HepG2 (cell line): ENCODE measurements at regions of chr7 and their contacts with region 1.

Region 1: GRCh38 chr7:127585044-127585953 is at the start of gene GCC1:
- DNase-seq: peak; percentile 75
- ATAC-seq: peak; percentile 63
- H3K4me3 ChIP-seq: peak within 1 kb of the TSS; percentile 68 to 86 (median 83)
- H3K27ac ChIP-seq: peak within 1 kb of the TSS; percentile 62
- H3K4me1 ChIP-seq: peaks cover 75% of the 10 kb centered on the region
- H3K27me3 ChIP-seq: no peaks in the 10 kb centered on the region; a peak in 1 of 5 replicates
- CTCF ChIP-seq: 0 out of 2 replicates have a peak, but pooled peaks have one; percentile 23
- EP300 ChIP-seq: no peak
- POLR2A ChIP-seq: peak; percentile 65 to 86
- RAD21 ChIP-seq: no peak
- total RNA-seq, gene GCC1: 15.3 and 17.4 TPM in 2 replicates

Region 2: DNA sequence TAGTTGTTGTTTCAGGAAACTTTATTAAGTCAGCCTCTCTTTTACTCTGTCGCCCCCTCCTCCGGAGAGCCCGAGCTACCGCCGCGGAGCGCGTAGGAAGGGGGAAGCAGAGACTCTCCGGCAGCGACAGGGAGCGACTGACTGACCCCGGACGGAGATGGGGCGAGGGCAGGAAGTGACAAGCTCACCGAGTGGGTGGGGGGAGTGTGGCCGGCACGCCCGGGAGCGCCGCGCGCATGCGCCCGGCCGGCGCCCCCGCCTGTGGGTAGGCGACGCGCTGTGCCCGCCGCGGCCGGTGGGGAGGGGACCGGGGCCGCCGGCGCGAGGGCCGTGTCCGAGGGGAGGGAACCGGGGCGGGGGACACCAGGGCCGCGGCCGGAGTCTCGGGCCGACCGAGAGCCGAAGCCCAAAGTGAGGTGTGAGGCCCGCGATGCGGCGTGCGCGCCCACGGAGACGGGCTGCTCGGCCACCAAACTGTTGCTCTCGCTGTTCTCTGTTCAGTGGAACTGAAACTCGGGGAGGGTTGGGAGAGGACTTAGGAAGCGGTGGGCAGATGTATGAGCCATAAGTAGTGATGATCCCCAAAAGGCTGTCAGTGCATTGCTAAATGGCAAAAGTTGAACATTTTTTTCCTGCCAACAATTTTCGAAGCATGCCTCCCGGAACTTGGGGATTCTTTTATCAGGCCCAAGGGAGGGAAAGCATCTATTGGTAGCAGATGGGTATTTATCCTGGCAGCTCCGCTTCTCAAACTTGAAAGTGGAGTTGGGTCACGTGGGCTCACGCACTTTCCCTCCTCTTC is 192.5 kb before region 1 on chr7 and contains the start of gene ZNF800:
- CTCF ChIA-PET with region 1: no interaction called
- POLR2A ChIA-PET with region 1: interaction called, 3 read pairs
- in situ Hi-C with region 1: no loop called
- intact Hi-C with region 1: loop called (anchors 10 kb)
- DNase-seq: peak; percentile 78
- ATAC-seq: peak; percentile 94
- H3K4me3 ChIP-seq: peak within 1 kb of the TSS; percentile 91 to 100 (median 97)
- H3K27ac ChIP-seq: peak within 1 kb of the TSS; percentile 79
- H3K4me1 ChIP-seq: peaks cover 37% of the 10 kb centered on the region
- H3K27me3 ChIP-seq: no peaks in the 10 kb centered on the region; a peak in 1 of 5 replicates
- CTCF ChIP-seq: no peak
- EP300 ChIP-seq: no peak
- POLR2A ChIP-seq: peak; percentile 76 to 89
- RAD21 ChIP-seq: no peak; the same call in 1 of the 2 replicates
- total RNA-seq, gene ZNF800: 12.7 and 13.7 TPM in 2 replicates

Region 3: GRCh38 chr7:127629268-127629854 is 44.1 kb after region 1 on chr7:
- CTCF ChIA-PET with region 1: interaction called, 8 read pairs
- POLR2A ChIA-PET with region 1: interaction called, 3 read pairs
- in situ Hi-C with region 1: no loop called
- intact Hi-C with region 1: loop called (anchors 2 kb)
- DNase-seq: peak; percentile 33
- ATAC-seq: peak; percentile 98
- H3K4me3 ChIP-seq: peak overlapping the region in 1 of 3 experiments; percentile 26; a peak in 1 of 6 replicates
- H3K27ac ChIP-seq: no peak overlapping the region
- H3K4me1 ChIP-seq: no peaks in the 10 kb centered on the region
- H3K27me3 ChIP-seq: no peaks in the 10 kb centered on the region; a peak in 1 of 5 replicates
- CTCF ChIP-seq: peak; percentile 88
- EP300 ChIP-seq: no peak
- POLR2A ChIP-seq: no peak
- RAD21 ChIP-seq: peak; percentile 52

Region 4: GRCh38 chr7:127651556-127652332 is 66.4 kb after region 1 on chr7 and contains the start of gene SND1:
- CTCF ChIA-PET with region 1: no interaction called
- POLR2A ChIA-PET with region 1: interaction called, 4 read pairs
- in situ Hi-C with region 1: loop called (anchors 5 kb)
- intact Hi-C with region 1: loop called (anchors 10 kb)
- DNase-seq: peak; percentile 99
- ATAC-seq: peak; percentile 96
- H3K4me3 ChIP-seq: peak within 1 kb of the TSS; percentile 86 to 98 (median 98)
- H3K27ac ChIP-seq: peak within 1 kb of the TSS; percentile 88
- H3K4me1 ChIP-seq: peaks cover 64% of the 10 kb centered on the region
- H3K27me3 ChIP-seq: no peaks in the 10 kb centered on the region; a peak in 1 of 5 replicates
- CTCF ChIP-seq: no peak
- EP300 ChIP-seq: no peak
- POLR2A ChIP-seq: peak; percentile 90 to 93
- RAD21 ChIP-seq: peak; percentile 45; the same call in 1 of the 2 replicates
- total RNA-seq, gene SND1: 170 and 182 TPM in 2 replicates